ENCODE measurements at regions of chr2 and their contacts with region 1.

Region 1: DNA sequence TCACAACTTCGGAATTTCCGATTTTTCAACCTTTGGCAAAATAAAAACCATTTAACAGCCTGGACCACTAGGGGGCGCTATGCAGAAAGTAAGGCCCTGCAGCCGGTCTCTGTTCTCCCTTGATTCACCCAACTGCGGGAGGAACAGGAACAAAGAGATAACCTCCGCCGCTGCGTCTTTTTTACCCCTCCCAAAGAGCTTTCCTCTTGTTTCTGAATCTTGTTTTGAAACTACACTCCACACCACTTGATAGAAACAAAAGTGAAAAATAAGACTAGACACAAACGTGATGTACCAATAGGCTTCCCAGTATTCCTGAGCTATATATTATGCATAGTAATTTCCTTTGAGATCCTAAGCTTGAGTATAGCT is 231.2 kb downstream of the MYO3B start:
- DNase-seq: peak; percentile 73
- H3K4me3 Mint-ChIP-seq: no peak overlapping the region
- H3K27ac Mint-ChIP-seq: no peak overlapping the region
- H3K4me1 Mint-ChIP-seq: peaks cover 10% of the 10 kb centered on the region
- H3K27me3 Mint-ChIP-seq: no peaks in the 10 kb centered on the region
- CTCF ChIP-seq: peak; percentile 75

Region 2: DNA sequence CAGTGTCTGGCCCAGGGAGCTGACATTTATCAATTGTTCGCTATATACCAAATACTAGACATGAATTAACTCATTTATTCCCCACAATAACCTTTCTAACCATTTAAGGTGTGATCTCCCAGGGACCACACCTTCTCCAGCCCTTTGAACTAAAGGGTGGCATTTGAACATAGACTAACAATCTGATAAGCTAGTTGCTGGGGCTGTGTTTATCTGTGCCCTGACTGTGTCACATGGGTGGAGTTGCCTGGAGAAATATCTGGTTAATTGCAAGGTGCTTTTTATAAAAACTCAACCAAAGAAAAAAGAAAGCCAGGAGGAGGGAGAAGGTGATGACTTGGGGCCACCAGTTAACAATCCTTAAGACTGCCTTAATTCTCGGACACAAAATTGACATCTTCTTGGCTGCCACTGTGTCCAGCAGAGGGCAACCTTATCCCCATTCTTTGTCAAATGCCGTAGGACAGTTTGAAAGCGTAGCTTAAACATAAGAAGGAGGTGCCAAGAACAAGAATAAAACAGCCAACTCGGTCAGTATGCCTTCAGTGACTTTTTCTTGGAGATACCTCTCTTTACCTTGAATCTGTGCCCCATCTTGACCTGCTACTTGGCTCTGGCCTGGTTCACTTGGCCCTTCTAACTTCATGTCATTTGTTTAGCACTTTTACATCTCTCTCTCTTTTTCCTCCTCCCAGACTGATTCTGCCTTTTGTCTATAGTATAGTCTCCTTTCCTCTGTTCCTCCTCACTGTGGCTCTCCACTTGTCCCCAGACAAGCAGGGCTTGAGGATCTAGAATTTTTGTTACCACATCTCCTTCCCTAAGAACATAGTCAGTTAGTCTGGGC is 47.8 kb before region 1 on chr2:
- CTCF ChIA-PET with region 1: no interaction called
- intact Hi-C with region 1: no loop called
- DNase-seq: peak; percentile 56
- H3K4me3 Mint-ChIP-seq: no peak overlapping the region
- H3K27ac Mint-ChIP-seq: no peak overlapping the region
- H3K4me1 Mint-ChIP-seq: peaks cover 10% of the 10 kb centered on the region
- H3K27me3 Mint-ChIP-seq: peaks cover 18% of the 10 kb centered on the region
- CTCF ChIP-seq: peak; percentile 65

Region 3: DNA sequence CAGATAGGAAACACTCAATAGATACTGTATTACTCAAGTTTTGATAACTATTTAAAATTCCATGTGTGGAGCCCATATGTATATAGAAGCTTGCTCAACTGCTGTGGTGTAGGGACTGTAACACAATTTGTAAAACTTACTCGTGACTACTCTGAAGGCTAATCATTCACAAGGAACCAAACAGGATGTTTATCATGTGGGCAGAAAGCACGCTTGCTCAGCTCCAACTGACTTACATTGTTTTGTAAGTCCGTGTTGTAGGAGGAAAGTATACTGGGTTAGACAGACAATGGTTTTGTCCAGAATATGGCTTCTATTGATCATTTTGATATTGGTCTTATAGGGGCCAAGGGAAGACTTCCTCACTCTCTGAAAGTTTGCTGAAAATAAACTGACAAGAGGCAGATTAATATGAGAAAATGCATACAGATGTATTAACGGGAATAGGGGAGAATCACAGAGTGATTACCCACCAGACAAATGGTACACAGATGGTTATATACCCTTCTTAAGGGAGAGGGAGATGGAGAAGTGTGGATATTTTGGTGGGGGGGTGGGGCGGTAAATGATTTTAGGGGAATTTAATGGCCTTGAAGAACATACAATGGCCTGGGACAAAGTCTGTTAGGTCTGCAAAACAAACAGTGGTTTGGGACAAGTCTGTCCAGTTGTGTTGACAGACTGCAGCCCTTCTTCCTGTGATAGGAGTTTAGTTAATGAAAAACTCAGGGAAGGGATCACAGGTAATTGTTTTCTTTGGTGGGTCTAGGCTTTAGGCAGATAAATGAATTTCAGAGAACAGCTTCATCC is 46.7 kb after region 1 on chr2:
- CTCF ChIA-PET with region 1: no interaction called
- intact Hi-C with region 1: loop called (anchors 5 kb)
- DNase-seq: peak; percentile 19
- H3K4me3 Mint-ChIP-seq: peak overlapping the region; percentile 60
- H3K27ac Mint-ChIP-seq: peak overlapping the region; percentile 84
- H3K4me1 Mint-ChIP-seq: peaks cover 42% of the 10 kb centered on the region
- H3K27me3 Mint-ChIP-seq: no peaks in the 10 kb centered on the region
- CTCF ChIP-seq: no peak

Region 4: GRCh38 chr2:170530284-170530745 is 121.2 kb after region 1 on chr2:
- CTCF ChIA-PET with region 1: interaction called, 3 read pairs
- intact Hi-C with region 1: loop called (anchors 5 kb)
- DNase-seq: peak; percentile 70
- H3K4me3 Mint-ChIP-seq: peak overlapping the region; percentile 29
- H3K27ac Mint-ChIP-seq: no peak overlapping the region
- H3K4me1 Mint-ChIP-seq: peaks cover 30% of the 10 kb centered on the region
- H3K27me3 Mint-ChIP-seq: no peaks in the 10 kb centered on the region
- CTCF ChIP-seq: no peak

Region 5: GRCh38 chr2:170715062-170715931 is 306.1 kb after region 1 on chr2 and contains the start of gene SP5:
- CTCF ChIA-PET with region 1: interaction called, 3 read pairs
- intact Hi-C with region 1: loop called (anchors 5 kb)
- DNase-seq: peak; percentile 55
- H3K4me3 Mint-ChIP-seq: peak within 1 kb of the TSS; percentile 74
- H3K27ac Mint-ChIP-seq: peak within 1 kb of the TSS; percentile 48
- H3K4me1 Mint-ChIP-seq: peaks cover 9% of the 10 kb centered on the region
- H3K27me3 Mint-ChIP-seq: peaks cover 26% of the 10 kb centered on the region
- CTCF ChIP-seq: no peak
- total RNA-seq, gene SP5: 0.73 TPM in 2 replicates